Right ventricle myocardium inferior (tissue), 1 donor: ENCODE measurements at regions of chr7 and their contacts with region 1.

Region 1: DNA sequence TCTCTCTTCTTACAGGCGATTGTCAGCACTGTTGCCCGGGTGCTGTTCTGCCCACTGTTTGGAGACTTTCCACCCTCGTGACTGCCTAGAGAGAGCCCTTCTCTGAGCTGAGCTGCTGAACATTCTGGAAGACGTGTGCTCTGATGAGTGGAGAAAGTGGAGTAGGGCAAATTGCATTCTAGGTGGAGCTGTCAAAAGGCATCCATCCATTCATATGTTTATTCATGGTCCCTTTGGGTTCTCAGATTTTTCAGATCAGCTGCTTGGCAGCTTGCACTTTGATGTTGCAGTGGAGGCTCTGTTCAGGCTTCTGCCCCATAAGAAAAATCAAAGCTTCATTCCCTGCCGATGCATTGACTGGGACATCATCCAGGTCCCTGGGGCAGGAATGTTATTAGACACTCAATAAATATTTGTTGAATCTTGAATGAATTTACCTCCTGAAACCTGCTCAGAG is 120.7 kb upstream of the EEPD1 start:
- DNase-seq: no peak
- ATAC-seq: no peak

Region 2: GRCh38 chr7:36071605-36072004 is 39.2 kb after region 1 on chr7:
- intact Hi-C with region 1: no loop called
- DNase-seq: no peak
- ATAC-seq: no peak

Region 3: GRCh38 chr7:36084475-36085097 is 52.2 kb after region 1 on chr7:
- intact Hi-C with region 1: loop called (anchors 5 kb)
- DNase-seq: no peak
- ATAC-seq: peak; percentile 69